ENCODE measurements at regions of chr9 and their contacts with region 1.

Region 1: GRCh38 chr9:107340920-107341632 is 58.0 kb downstream of the RAD23B start:
- DNase-seq: peak; percentile 85
- ATAC-seq: peak; percentile 88
- H3K4me3 Mint-ChIP-seq: peak overlapping the region; percentile 53
- H3K27ac Mint-ChIP-seq: peak overlapping the region; percentile 64
- H3K4me1 Mint-ChIP-seq: peaks cover 8% of the 10 kb centered on the region
- H3K27me3 Mint-ChIP-seq: no peaks in the 10 kb centered on the region

Region 2: DNA sequence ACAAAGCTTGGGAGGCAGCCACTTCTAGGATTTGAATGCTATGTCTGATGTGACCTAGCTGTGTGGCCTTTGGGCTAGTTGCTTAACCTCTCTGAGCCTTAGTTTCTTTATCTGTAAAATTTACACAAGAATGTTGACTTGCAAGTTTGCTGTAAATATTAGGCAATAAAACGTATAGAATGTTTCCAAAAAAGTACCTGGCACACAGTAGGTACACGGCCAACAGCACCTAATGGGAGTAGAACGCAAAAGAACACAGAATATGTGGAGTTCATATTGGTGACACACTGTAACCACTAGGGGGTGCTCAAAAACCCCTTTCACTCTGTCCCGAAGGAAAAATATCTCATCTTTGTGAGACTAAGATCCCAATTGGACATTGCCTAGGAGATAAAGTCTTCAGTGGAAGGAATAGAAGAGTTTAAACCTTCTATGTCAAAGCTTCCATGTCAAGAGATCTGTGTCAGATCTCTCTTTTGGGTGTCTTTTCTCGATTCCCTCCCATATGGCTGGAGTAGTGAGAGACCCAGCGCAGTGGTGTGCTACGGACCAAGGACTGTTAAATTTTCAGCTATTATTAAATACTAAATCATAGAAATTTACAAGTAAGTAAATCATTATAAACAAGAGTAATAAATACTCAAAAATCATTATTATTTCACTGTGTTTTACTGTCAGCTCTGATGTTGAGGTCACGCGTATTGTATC is 203.4 kb before region 1 on chr9:
- CTCF ChIA-PET with region 1: interaction called, 24 read pairs
- DNase-seq: no peak
- ATAC-seq: no peak
- H3K4me3 Mint-ChIP-seq: no peak overlapping the region
- H3K27ac Mint-ChIP-seq: no peak overlapping the region
- H3K4me1 Mint-ChIP-seq: no peaks in the 10 kb centered on the region
- H3K27me3 Mint-ChIP-seq: peaks cover 9% of the 10 kb centered on the region

Region 3: GRCh38 chr9:107239474-107239873 is 101.6 kb before region 1 on chr9:
- CTCF ChIA-PET with region 1: interaction called, 17 read pairs
- DNase-seq: no peak
- ATAC-seq: no peak
- H3K4me3 Mint-ChIP-seq: no peak overlapping the region
- H3K27ac Mint-ChIP-seq: no peak overlapping the region
- H3K4me1 Mint-ChIP-seq: peaks cover 28% of the 10 kb centered on the region
- H3K27me3 Mint-ChIP-seq: peaks cover 17% of the 10 kb centered on the region

Region 4: GRCh38 chr9:107260437-107261086 is 80.5 kb before region 1 on chr9:
- CTCF ChIA-PET with region 1: interaction called, 12 read pairs
- DNase-seq: no peak
- ATAC-seq: no peak
- H3K4me3 Mint-ChIP-seq: no peak overlapping the region
- H3K27ac Mint-ChIP-seq: no peak overlapping the region
- H3K4me1 Mint-ChIP-seq: peaks cover 5% of the 10 kb centered on the region
- H3K27me3 Mint-ChIP-seq: peaks cover 23% of the 10 kb centered on the region

Region 5: GRCh38 chr9:107282753-107283625 is 58.1 kb before region 1 on chr9 and contains the start of gene RAD23B:
- CTCF ChIA-PET with region 1: interaction called, 22 read pairs
- DNase-seq: peak; percentile 98
- ATAC-seq: peak; percentile 91
- H3K4me3 Mint-ChIP-seq: peak within 1 kb of the TSS; percentile 97
- H3K27ac Mint-ChIP-seq: peak within 1 kb of the TSS; percentile 92
- H3K4me1 Mint-ChIP-seq: peaks cover 43% of the 10 kb centered on the region
- H3K27me3 Mint-ChIP-seq: no peaks in the 10 kb centered on the region
- total RNA-seq, gene RAD23B: 98.7 to 109 TPM

Region 6: DNA sequence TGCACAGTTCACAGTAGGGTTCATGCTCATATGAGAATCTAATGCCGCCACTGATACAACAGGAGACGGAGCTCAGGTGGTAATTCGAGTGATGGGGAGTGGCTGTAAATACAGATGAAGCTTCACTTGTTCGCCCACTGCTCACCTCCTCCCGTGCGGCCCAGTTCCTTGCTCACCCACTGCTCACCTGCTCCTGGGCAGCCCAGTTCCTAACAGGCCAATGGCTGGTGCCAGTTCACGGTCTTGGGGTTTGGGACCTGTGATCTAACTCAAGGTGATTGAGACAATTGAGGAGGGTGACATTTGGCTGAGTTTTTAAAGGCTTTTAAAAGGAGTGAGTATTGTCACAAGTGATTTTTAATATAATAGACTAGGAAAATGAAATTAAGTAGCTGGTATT is 12.6 kb before region 1 on chr9:
- CTCF ChIA-PET with region 1: interaction called, 12 read pairs
- DNase-seq: no peak
- ATAC-seq: no peak
- H3K4me3 Mint-ChIP-seq: no peak overlapping the region
- H3K27ac Mint-ChIP-seq: no peak overlapping the region
- H3K4me1 Mint-ChIP-seq: peaks cover 1% of the 10 kb centered on the region
- H3K27me3 Mint-ChIP-seq: no peaks in the 10 kb centered on the region

Measured in activated CD8-positive, alpha-beta memory T cell treated with anti-CD3 and anti-CD28 coated beads, Interleukin-2, amount 10 ng/mL, durations not matched to agents 7 days and 5 days (primary cell).